ENCODE measurements at regions of chr17 and their contacts with region 1.

Region 1: GRCh38 chr17:2054512-2055291 is at the start of gene HIC1:
- DNase-seq: peak; percentile 59 to 91 (median 84)
- ATAC-seq: peak; percentile 63
- H3K4me3 ChIP-seq: peak within 1 kb of the TSS; percentile 68
- H3K4me3 Mint-ChIP-seq: peak within 1 kb of the TSS; percentile 76 to 87 (median 80)
- H3K27ac ChIP-seq: peak within 1 kb of the TSS; percentile 70
- H3K27ac Mint-ChIP-seq: peak within 1 kb of the TSS in 8 of 9 donors; percentile 28 to 91 (median 73)
- H3K4me1 ChIP-seq: peaks cover 17 to 29% of the 10 kb centered on the region in 2 donors
- H3K4me1 Mint-ChIP-seq: peaks cover 8 to 28% (median 19%) of the 10 kb centered on the region in 7 donors
- H3K27me3 ChIP-seq: no peaks in the 10 kb centered on the region
- H3K27me3 Mint-ChIP-seq: peaks cover 3 to 15% (median 5%) of the 10 kb centered on the region in 5 donors
- total RNA-seq, gene HIC1: 1.4 to 128 (median 6.3) TPM

Region 2: DNA sequence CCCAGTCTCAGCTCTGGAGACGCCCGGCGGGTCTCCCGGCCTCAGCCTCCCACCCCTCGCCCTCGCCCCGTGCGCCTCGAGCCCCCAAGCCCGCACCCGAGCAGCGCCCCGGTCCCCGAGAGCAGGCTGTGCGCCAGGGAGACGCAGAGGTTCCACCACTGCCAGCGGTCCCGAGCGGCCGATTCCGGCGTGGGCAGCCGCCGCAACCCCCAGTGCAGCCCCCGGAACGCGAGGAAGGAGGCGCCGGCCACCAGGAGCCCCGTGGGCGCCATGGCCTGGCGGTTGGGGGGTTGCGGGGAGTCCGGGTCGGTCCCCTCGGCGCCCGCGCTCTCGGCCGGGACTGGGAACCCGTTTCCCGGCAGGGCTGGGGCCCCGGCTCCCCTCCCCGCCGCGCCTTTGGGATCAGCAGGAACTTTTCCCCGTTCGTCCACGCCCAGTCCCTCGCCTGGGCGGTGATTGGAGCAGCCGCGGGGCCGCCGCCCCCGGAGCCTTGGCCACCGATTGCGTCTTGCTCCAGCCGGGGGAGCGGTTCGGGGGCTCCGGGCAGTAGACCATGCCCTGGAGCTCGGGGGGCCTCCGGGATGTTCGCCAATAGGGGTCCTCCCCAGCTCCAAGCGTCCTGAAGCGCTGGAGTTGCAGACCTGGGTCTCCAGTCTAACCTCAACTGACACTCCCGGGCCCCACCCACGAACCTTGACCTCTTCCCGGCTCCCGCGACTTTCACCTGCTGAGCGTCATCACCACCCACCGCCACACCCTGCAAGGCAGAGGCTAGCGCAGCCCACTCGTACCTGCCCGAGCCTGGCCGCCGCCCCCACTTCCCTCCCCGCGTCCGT is 344.5 kb before region 1 on chr17 and contains the start of gene TLCD2:
- CTCF ChIA-PET with region 1: no interaction called
- POLR2A ChIA-PET with region 1: no interaction called
- intact Hi-C with region 1: no loop called
- DNase-seq: peak in 1 of 9 donors; percentile 45
- ATAC-seq: peak; percentile 14
- H3K4me3 ChIP-seq: peak within 1 kb of the TSS; percentile 47
- H3K4me3 Mint-ChIP-seq: peak within 1 kb of the TSS; percentile 37 to 88 (median 75)
- H3K27ac ChIP-seq: peak within 1 kb of the TSS; percentile 25
- H3K27ac Mint-ChIP-seq: peak within 1 kb of the TSS in 4 of 9 donors; percentile 6 to 77 (median 42)
- H3K4me1 ChIP-seq: peaks cover 11 to 16% of the 10 kb centered on the region in 2 donors
- H3K4me1 Mint-ChIP-seq: peaks cover 10 to 27% (median 20%) of the 10 kb centered on the region in 7 donors
- H3K27me3 ChIP-seq: peaks cover 0 to 6% of the 10 kb centered on the region in 2 donors
- H3K27me3 Mint-ChIP-seq: peaks cover 10 to 42% (median 24%) of the 10 kb centered on the region in 5 donors
- total RNA-seq, gene TLCD2: 0.05 to 0.49 (median 0.08) TPM in 4 of 5 experiments, not detected in the other

Region 3: GRCh38 chr17:2029911-2030778 is 24.6 kb before region 1 on chr17 and contains the start of gene DPH1:
- CTCF ChIA-PET with region 1: no interaction called
- POLR2A ChIA-PET with region 1: no interaction called
- intact Hi-C with region 1: loop called (anchors 1 to 2 kb)
- DNase-seq: peak; percentile 72 to 88 (median 83)
- ATAC-seq: peak; percentile 93
- H3K4me3 ChIP-seq: peak within 1 kb of the TSS; percentile 95
- H3K4me3 Mint-ChIP-seq: peak within 1 kb of the TSS; percentile 92 to 99 (median 96)
- H3K27ac ChIP-seq: peak within 1 kb of the TSS; percentile 85
- H3K27ac Mint-ChIP-seq: peak within 1 kb of the TSS; percentile 65 to 96 (median 89)
- H3K4me1 ChIP-seq: peaks cover 13 to 27% of the 10 kb centered on the region in 2 donors
- H3K4me1 Mint-ChIP-seq: peaks cover 17 to 43% (median 29%) of the 10 kb centered on the region in 7 donors
- H3K27me3 ChIP-seq: peaks cover 0 to 4% of the 10 kb centered on the region in 2 donors
- H3K27me3 Mint-ChIP-seq: peaks cover 9 to 38% (median 15%) of the 10 kb centered on the region in 5 donors
- total RNA-seq, gene DPH1: 47.3 to 124 (median 97.6) TPM

Region 4: GRCh38 chr17:2215616-2216364 is 161.1 kb after region 1 on chr17:
- CTCF ChIA-PET with region 1: no interaction called
- POLR2A ChIA-PET with region 1: interaction called, 5 read pairs
- intact Hi-C with region 1: loop called in 1 of 2 experiments (anchors 1 kb)
- DNase-seq: peak; percentile 43 to 81 (median 77)
- ATAC-seq: peak; percentile 98
- H3K4me3 ChIP-seq: peak overlapping the region; percentile 40
- H3K4me3 Mint-ChIP-seq: peak overlapping the region; percentile 74 to 89 (median 80)
- H3K27ac ChIP-seq: peak overlapping the region; percentile 89
- H3K27ac Mint-ChIP-seq: peak overlapping the region; percentile 94 to 98 (median 97)
- H3K4me1 ChIP-seq: peaks cover 34 to 53% of the 10 kb centered on the region in 2 donors
- H3K4me1 Mint-ChIP-seq: peaks cover 27 to 70% (median 64%) of the 10 kb centered on the region in 7 donors
- H3K27me3 ChIP-seq: no peaks in the 10 kb centered on the region
- H3K27me3 Mint-ChIP-seq: no peaks in the 10 kb centered on the region

Region 5: GRCh38 chr17:2266045-2266864 is 211.6 kb after region 1 on chr17:
- CTCF ChIA-PET with region 1: interaction called, 4 read pairs
- POLR2A ChIA-PET with region 1: interaction called, 7 read pairs
- intact Hi-C with region 1: loop called (anchors 1 kb)
- DNase-seq: peak; percentile 20 to 96 (median 91)
- ATAC-seq: peak; percentile 92
- H3K4me3 ChIP-seq: peak overlapping the region; percentile 38
- H3K4me3 Mint-ChIP-seq: peak overlapping the region; percentile 69 to 94 (median 82)
- H3K27ac ChIP-seq: peak overlapping the region; percentile 80
- H3K27ac Mint-ChIP-seq: peak overlapping the region; percentile 96 to 100 (median 99)
- H3K4me1 ChIP-seq: peaks cover 65 to 90% of the 10 kb centered on the region in 2 donors
- H3K4me1 Mint-ChIP-seq: peaks cover 38 to 89% (median 83%) of the 10 kb centered on the region in 7 donors
- H3K27me3 ChIP-seq: no peaks in the 10 kb centered on the region
- H3K27me3 Mint-ChIP-seq: no peaks in the 10 kb centered on the region

Region 6: DNA sequence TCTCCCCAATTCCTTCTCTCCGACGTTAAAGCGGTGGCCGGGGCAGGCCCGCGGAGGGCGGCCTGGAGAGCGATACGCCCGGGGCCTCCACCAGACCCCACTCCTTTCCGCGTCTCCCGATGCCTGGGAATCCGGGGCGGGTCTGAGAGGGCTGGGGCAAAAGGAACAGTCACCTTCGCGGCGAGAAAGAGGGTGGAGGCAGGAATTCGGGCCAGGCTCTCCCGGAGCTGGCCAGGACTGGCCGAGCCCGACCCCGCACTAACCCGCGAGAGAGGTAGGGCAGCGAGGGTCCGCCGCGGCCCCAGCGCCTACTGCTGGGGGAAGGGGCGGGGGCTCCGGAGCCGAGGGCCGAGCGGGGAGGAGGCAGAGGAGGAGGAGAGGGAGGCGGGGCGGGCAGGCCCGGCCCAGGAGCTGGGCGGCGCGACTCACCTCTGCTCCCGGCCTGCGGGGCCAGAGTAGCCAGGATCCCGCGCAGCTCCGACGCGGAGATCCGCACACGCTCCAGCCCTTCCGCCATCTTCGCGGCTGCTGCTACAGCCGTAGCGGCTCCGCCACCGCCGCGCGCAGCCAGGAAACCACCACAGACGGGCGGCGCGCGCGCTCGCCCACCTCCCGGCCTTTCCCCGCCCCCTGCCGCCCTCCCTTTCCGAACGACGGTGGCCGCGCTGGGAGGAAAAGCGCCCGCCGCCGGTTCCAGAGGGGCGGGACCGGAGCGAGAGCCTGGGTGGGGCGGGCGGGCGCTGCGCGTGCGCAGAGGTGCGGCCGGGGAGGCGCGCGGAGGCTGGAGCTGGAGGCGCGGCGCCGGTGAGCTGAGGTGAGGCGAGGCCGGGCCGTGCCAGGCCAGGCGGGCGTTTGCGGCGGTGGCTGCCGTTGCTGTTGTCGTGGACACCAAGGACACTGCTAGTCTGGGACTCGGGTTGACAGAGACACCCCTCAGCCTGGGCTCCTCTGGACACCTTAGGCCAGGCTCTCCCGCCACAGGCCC is 248.8 kb after region 1 on chr17 and contains the starts of genes SMG6 and SRR:
- CTCF ChIA-PET with region 1: interaction called, 4 read pairs
- POLR2A ChIA-PET with region 1: interaction called, 3 read pairs
- intact Hi-C with region 1: loop called (anchors 1 kb)
- DNase-seq: peak; percentile 87 to 95 (median 93)
- ATAC-seq: peak; percentile 97
- H3K4me3 ChIP-seq: peak within 1 kb of the TSS; percentile 87
- H3K4me3 Mint-ChIP-seq: peak within 1 kb of the TSS; percentile 90 to 98 (median 92)
- H3K27ac ChIP-seq: peak within 1 kb of the TSS; percentile 98
- H3K27ac Mint-ChIP-seq: peak within 1 kb of the TSS; percentile 76 to 95 (median 84)
- H3K4me1 ChIP-seq: peaks cover 9 to 13% of the 10 kb centered on the region in 2 donors
- H3K4me1 Mint-ChIP-seq: peaks cover 25 to 61% (median 47%) of the 10 kb centered on the region in 7 donors
- H3K27me3 ChIP-seq: no peaks in the 10 kb centered on the region
- H3K27me3 Mint-ChIP-seq: no peaks in the 10 kb centered on the region
- total RNA-seq, gene SMG6: 45.6 to 65.3 (median 55.8) TPM
- total RNA-seq, gene SRR: 3.1 to 16.0 (median 8.3) TPM

Region 7: DNA sequence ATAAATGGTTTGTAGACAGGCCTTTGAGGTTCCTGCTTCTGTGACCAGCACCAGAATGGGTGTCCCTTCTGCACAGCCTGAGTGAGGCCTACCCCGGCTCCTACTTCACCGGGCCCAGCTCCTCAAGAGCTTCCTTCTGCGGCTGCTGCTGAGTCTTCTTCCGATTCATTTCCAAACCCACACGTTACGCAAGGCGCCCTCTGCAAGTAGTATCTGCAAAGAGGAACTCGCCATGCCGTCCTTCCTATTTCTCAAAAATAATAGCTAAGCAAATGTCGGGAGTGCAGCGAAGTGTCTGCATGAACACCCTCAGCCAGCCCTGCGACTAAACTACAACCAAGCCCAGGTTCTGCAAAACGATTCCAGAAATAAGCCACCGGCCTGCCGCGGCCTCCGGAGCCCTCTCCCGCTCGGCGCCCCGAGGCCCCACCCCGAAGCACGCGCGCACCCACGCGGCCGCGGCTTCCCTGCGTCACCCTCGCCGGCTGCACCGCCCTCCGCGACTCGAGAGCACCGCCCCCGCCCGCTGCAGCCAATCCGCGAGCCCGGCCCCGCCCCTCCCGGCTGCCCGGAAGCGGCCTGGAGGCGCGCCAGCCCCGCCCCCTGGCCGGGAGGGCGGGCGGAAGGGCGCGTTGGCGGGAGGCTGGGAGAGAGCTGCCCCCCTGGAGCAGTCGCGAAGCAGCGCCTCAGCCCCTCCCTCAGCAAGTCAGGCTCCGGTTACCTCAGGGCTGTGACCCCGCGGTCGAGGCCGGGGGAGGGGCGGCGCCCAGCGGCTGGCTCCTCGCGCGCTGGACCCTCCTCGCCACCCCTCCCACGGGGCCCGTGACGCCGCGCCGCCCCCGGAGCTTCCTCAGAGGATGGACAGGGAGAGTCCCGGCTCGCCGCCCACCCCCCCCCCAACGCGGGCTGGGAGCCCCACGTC is 337.8 kb after region 1 on chr17:
- CTCF ChIA-PET with region 1: no interaction called
- POLR2A ChIA-PET with region 1: no interaction called
- intact Hi-C with region 1: loop called in 1 of 2 experiments (anchors 2 kb)
- DNase-seq: peak; percentile 94 to 100 (median 98)
- ATAC-seq: peak; percentile 78
- H3K4me3 ChIP-seq: peak overlapping the region; percentile 89
- H3K4me3 Mint-ChIP-seq: peak overlapping the region; percentile 88 to 97 (median 94)
- H3K27ac ChIP-seq: peak overlapping the region; percentile 100
- H3K27ac Mint-ChIP-seq: peak overlapping the region; percentile 90 to 98 (median 96)
- H3K4me1 ChIP-seq: peaks cover 15 to 52% of the 10 kb centered on the region in 2 donors
- H3K4me1 Mint-ChIP-seq: peaks cover 38 to 70% (median 56%) of the 10 kb centered on the region in 7 donors
- H3K27me3 ChIP-seq: no peaks in the 10 kb centered on the region
- H3K27me3 Mint-ChIP-seq: no peaks in the 10 kb centered on the region